ENCODE measurements at regions of chr7 and their contacts with region 1.

Region 1: GRCh38 chr7:64902806-64903721 is at the start of gene ZNF273:
- DNase-seq: peak; percentile 87
- H3K4me3 Mint-ChIP-seq: peak within 1 kb of the TSS; percentile 97
- H3K27ac Mint-ChIP-seq: peak within 1 kb of the TSS; percentile 93
- H3K4me1 Mint-ChIP-seq: peaks cover 26% of the 10 kb centered on the region
- H3K27me3 Mint-ChIP-seq: no peaks in the 10 kb centered on the region
- total RNA-seq, gene ZNF273: 7.2 and 7.5 TPM in 2 replicates

Region 2: GRCh38 chr7:64307254-64308015 is 595.6 kb before region 1 on chr7:
- intact Hi-C with region 1: loop called (anchors 1 kb)
- DNase-seq: peak; percentile 92
- H3K4me3 Mint-ChIP-seq: peak overlapping the region; percentile 97
- H3K27ac Mint-ChIP-seq: peak overlapping the region; percentile 91
- H3K4me1 Mint-ChIP-seq: peaks cover 12% of the 10 kb centered on the region
- H3K27me3 Mint-ChIP-seq: no peaks in the 10 kb centered on the region

Region 3: GRCh38 chr7:64665980-64666662 is 236.9 kb before region 1 on chr7 and contains the start of gene ZNF107:
- intact Hi-C with region 1: loop called (anchors 5 kb)
- DNase-seq: peak; percentile 83
- H3K4me3 Mint-ChIP-seq: peak within 1 kb of the TSS; percentile 97
- H3K27ac Mint-ChIP-seq: peak within 1 kb of the TSS; percentile 92
- H3K4me1 Mint-ChIP-seq: peaks cover 11% of the 10 kb centered on the region
- H3K27me3 Mint-ChIP-seq: no peaks in the 10 kb centered on the region
- total RNA-seq, gene ZNF107: 12.8 and 13.1 TPM in 2 replicates

Region 4: GRCh38 chr7:65006094-65006992 is 103.3 kb after region 1 on chr7 and contains the start of gene ERV3-1:
- intact Hi-C with region 1: loop called (anchors 1 kb)
- DNase-seq: peak; percentile 91
- H3K4me3 Mint-ChIP-seq: peak within 1 kb of the TSS; percentile 94
- H3K27ac Mint-ChIP-seq: peak within 1 kb of the TSS; percentile 95
- H3K4me1 Mint-ChIP-seq: peaks cover 22% of the 10 kb centered on the region
- H3K27me3 Mint-ChIP-seq: no peaks in the 10 kb centered on the region
- total RNA-seq, gene ERV3-1: 9.7 and 9.8 TPM in 2 replicates

Region 5: GRCh38 chr7:65338346-65338745 is 435.3 kb after region 1 on chr7:
- intact Hi-C with region 1: no loop called
- DNase-seq: no peak
- H3K4me3 Mint-ChIP-seq: no peak overlapping the region
- H3K27ac Mint-ChIP-seq: no peak overlapping the region
- H3K4me1 Mint-ChIP-seq: no peaks in the 10 kb centered on the region
- H3K27me3 Mint-ChIP-seq: no peaks in the 10 kb centered on the region

Region 6: DNA sequence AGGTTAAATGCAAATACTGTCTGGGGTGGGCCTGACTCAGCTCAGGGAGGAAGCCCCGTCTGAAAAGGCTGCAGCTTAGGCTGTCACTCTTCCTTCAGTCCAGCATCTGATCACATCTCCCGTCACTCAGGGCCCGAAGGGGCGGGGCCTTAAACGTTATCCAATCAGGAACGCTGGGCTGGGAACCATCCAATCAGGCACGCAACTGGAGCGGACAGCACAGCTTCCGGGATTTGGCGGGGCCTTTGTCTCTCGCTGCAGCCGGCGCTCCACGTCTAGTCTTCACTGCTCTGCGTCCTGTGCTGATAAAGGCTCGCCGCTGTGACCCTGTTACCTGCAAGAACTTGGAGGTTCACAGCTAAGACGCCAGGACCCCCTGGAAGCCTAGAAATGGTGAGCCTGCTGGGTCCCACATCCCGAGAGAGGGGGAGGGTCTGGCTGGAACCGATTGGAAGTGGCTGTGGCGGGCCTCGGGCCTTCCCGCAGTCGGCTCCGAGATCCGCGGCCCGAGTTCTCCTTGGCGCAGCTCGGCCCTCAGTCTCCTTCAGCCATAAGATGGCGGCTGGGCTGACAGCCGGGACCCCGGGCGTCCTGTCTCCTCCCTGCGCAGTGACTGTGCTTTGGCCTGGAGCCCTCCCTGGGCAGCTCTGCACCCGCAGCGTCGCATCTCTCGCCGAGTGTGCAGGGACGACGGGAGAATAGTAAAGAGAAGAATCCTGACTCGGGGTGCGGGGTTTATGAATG is 470.7 kb after region 1 on chr7 and contains the start of gene ZNF92:
- intact Hi-C with region 1: loop called (anchors 10 kb)
- DNase-seq: peak; percentile 95
- H3K4me3 Mint-ChIP-seq: peak within 1 kb of the TSS; percentile 99
- H3K27ac Mint-ChIP-seq: peak within 1 kb of the TSS; percentile 93
- H3K4me1 Mint-ChIP-seq: peaks cover 17% of the 10 kb centered on the region
- H3K27me3 Mint-ChIP-seq: no peaks in the 10 kb centered on the region
- total RNA-seq, gene ZNF92: 15.2 and 17.0 TPM in 2 replicates

Measured in activated T-helper 2 cell treated with anti-CD3 and anti-CD28 coated beads, Interferon-gamma antibody, Interleukin-2, Interleukin-4, amounts not matched to agents 10 μg/mL and 5 μg/mL and 100 μg/mL, durations not matched to agents 14 hours and 24 hours and 36 hours (primary cell).